MCF 10A (cell line): ENCODE measurements at regions of chr16 and their contacts with region 1.

Region 1: DNA sequence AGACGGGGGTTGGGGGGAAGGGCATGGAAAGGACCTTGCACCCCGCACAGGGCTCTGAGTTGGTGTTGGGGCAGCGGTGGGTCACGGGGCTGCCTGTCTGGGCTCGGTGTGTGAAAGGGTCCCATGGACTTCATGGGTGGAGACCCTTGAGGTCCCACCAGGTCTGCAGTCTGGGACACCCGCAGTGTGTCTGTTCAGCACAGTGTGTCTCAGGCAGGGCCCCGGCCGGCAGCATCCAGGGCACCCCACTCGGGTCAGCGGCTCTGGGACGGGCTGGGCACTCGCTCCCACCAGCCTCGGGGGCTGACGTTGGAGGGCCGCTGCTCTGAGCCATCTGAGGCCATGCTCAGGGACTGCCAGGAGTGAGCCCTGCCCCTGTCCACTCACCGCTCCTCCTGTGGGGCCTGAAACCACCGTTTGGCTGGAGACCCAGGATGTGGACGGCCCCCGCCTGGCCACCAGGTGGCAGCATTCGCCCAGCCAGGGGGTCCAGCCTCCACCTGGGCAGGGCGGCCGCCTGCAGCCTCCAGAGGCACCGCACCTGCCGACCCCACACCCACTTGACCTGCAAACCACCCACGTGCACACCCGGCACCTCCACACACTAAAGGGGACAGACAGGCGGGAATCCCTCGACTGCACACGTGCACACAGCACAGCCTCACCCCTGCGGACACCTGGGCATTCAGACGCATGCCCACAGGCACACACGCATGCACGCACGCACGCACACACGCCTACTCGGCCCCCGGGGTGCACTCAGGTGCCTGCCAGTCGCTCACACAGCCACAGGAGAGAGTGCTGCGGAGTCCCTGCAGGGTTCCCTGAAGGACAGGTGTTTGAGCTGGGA is 10.1 kb upstream of the ZFPM1 start:
- DNase-seq: peak; percentile 76
- H3K4me3 Mint-ChIP-seq: no peak overlapping the region
- H3K27ac Mint-ChIP-seq: no peak overlapping the region
- H3K4me1 Mint-ChIP-seq: no peaks in the 10 kb centered on the region
- H3K27me3 Mint-ChIP-seq: peaks cover 19% of the 10 kb centered on the region
- CTCF ChIP-seq: peak; percentile 94

Region 2: DNA sequence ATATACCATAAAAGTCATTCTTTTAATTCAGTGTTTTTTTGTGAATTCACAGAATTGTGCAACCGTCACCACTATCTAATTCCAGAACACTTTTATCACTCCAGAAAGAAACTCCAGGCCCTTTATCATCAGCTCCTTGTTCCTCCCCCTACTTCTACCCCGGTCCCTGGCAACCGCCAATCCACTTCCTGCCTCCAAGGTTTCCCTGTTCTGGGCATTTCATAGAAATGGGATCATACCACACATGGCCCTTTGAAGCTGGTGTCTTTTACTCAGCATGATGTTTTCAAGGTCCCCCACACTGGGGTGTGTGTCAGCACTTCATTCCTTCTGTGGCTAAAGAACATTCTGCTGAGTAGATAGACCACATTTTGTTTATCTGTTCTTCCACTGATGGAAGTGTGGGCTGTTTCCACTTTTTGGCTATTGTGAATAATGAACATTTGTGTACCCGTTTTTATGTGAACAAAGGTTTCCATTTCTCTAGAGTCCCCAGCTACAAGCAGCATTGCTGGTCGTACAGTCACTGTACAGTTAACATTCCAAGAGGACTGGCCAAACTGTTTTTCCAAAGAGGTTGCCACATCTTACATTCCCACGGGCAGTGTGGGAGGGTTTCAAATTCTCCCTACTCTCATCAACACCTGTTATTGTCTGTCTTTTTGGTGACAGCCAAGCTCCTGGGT is 135.9 kb before region 1 on chr16:
- CTCF ChIA-PET with region 1: no interaction called
- POLR2A ChIA-PET with region 1: no interaction called
- intact Hi-C with region 1: no loop called
- DNase-seq: peak; percentile 61
- H3K4me3 Mint-ChIP-seq: no peak overlapping the region
- H3K27ac Mint-ChIP-seq: peak overlapping the region; percentile 42
- H3K4me1 Mint-ChIP-seq: peaks cover 36% of the 10 kb centered on the region
- H3K27me3 Mint-ChIP-seq: no peaks in the 10 kb centered on the region
- CTCF ChIP-seq: no peak

Region 3: DNA sequence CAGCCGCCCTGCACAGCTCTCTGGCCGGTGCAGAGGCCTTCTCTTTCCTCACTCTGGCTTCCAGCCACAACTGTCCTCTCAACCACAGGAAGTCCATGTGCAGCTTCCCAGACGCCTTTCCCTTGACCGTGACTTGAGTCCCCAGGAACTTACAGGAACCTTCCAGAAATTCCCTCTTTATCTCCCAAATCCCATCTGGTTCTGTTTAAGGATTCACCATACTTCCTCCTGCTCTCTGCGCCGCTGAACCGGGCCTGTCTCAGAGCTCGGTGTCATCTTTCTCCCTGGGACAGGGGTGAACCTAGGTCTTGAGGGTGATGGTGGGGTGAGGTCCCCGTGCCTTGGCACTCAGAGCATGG is 125.4 kb before region 1 on chr16:
- CTCF ChIA-PET with region 1: no interaction called
- POLR2A ChIA-PET with region 1: no interaction called
- intact Hi-C with region 1: no loop called
- DNase-seq: no peak
- H3K4me3 Mint-ChIP-seq: no peak overlapping the region
- H3K27ac Mint-ChIP-seq: no peak overlapping the region
- H3K4me1 Mint-ChIP-seq: no peaks in the 10 kb centered on the region
- H3K27me3 Mint-ChIP-seq: no peaks in the 10 kb centered on the region
- CTCF ChIP-seq: no peak

Region 4: DNA sequence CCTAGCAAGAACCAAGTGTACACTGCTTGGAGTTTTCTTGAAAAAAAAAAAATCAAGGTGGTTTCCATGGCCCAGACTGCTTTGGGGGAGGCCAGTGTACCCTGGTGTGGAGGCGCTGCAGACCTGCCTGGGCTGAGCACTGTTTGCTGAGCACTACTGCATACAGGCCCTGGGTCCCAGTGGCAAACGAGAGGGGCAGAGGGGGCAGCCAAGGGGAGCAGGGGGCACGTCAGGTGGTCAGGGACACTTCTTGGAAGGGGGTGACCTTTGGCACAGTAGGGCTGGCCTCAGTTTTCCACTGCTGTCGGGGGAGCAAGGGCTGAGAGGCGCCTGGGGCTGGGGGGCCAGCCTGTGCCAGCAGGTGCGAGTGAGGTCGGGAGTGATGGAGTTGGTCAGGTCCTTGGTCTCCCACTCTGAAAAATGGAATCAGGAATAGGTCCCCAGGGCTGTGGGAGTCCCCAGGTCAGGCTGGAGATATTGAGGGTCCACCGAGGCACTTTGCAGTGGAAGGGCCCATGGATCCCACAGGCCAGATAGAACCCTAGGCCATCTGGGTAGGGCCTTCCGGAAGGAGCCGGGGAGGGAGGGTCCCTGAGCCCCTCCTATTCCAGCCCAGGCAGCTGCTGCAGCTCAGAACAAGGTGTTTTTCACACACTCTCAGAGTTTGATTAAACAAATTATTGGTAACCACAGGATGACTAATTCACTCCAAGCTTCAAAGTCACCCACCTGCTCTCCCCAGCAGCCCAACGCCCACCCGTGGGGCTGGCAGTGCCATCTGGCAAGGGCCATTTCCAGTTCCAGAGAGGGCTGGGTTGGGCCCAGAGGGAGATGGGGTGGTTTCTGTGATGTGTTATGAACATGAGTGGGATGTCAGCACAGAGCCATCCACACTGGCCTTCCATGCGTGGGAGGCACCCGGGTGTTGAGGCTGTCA is 13.7 kb after region 1 on chr16:
- CTCF ChIA-PET with region 1: no interaction called
- POLR2A ChIA-PET with region 1: no interaction called
- intact Hi-C with region 1: no loop called
- DNase-seq: no peak
- H3K4me3 Mint-ChIP-seq: no peak overlapping the region
- H3K27ac Mint-ChIP-seq: no peak overlapping the region
- H3K4me1 Mint-ChIP-seq: no peaks in the 10 kb centered on the region
- H3K27me3 Mint-ChIP-seq: no peaks in the 10 kb centered on the region
- CTCF ChIP-seq: no peak

Region 5: GRCh38 chr16:88527186-88527936 is 84.4 kb after region 1 on chr16:
- CTCF ChIA-PET with region 1: interaction called, 5 read pairs
- POLR2A ChIA-PET with region 1: no interaction called
- intact Hi-C with region 1: loop called (anchors 1 kb)
- DNase-seq: peak; percentile 63
- H3K4me3 Mint-ChIP-seq: no peak overlapping the region
- H3K27ac Mint-ChIP-seq: no peak overlapping the region
- H3K4me1 Mint-ChIP-seq: no peaks in the 10 kb centered on the region
- H3K27me3 Mint-ChIP-seq: no peaks in the 10 kb centered on the region
- CTCF ChIP-seq: peak; percentile 94

Region 6: DNA sequence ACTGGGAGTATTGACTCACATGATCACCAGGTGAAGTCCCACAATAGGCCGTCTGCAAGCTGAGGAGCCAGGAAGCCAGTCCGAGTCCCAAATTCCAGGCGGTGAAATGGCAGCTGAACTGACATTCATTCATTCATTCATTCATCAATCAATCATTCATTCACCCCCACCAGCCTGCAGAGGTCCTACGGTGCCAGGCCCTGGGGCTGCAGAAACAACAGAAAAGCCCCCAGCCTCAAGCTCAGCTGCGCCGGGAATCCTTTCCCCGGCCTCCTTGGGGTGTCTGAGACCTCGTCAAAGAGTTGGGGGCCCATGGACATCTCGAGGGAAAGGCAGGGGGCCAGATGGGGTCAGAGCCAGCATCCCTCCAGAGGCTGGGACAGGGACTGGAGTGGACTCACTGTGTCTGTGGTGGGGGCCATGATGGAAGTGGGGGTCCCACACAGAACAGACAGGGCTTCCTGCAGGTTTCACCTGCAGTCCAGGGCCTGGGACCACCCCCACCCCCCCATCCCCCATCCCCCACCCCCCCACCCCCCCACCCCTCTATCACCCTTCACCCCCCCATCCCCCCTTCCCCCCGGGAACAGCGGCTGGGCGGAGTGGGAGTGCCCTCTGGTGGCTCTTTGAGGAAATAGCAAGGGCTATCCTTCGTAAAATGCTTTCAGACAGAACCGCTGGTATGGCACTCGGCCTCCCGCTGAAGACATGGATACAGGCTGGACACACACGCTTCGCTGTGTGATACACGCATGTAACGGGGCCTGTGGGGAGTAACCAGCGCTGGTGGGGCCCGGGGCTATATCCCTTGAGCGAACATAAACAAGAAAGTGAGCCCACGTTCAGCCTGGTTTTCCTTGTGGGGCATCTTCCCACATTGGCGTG is 118.8 kb after region 1 on chr16:
- CTCF ChIA-PET with region 1: interaction called, 5 read pairs
- POLR2A ChIA-PET with region 1: no interaction called
- intact Hi-C with region 1: loop called (anchors 1 kb)
- DNase-seq: peak; percentile 46
- H3K4me3 Mint-ChIP-seq: no peak overlapping the region
- H3K27ac Mint-ChIP-seq: no peak overlapping the region
- H3K4me1 Mint-ChIP-seq: no peaks in the 10 kb centered on the region
- H3K27me3 Mint-ChIP-seq: peaks cover 11% of the 10 kb centered on the region
- CTCF ChIP-seq: peak; percentile 70